GM12878 (cell line): ENCODE measurements at regions of chr6 and their contacts with region 1.

Region 1: DNA sequence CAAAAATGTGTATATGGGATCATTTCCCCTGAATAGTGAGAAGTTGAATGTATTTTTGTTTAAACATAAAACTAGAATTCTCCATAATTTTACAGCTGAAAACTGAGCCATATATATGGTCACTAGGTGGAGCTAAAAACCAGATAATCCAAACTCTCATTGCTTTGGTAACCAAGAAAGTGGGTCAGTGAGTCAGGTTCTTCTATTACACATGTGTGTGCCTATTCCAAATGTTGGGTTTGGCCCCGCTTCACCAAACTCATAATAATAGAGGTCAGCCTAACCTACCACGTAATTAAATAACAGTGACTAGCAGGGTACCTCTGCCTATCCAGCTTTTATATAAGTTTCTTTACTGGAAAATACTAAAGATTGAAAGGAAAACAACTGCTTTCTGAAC is 19.3 kb upstream of the RNGTT start:
- DNase-seq: peak; percentile 19
- ATAC-seq: peak; percentile 94
- H3K4me3 ChIP-seq: no peak overlapping the region
- H3K27ac ChIP-seq: no peak overlapping the region
- H3K4me1 ChIP-seq: no peaks in the 10 kb centered on the region; the same call in 1 of the 2 replicates
- H3K27me3 ChIP-seq: no peaks in the 10 kb centered on the region
- CTCF ChIP-seq: peak; percentile 51 to 83 (median 72); a peak in 5 of 6 replicates
- EP300 ChIP-seq: no peak
- POLR2A ChIP-seq: no peak
- RAD21 ChIP-seq: peak; percentile 89

Region 2: GRCh38 chr6:88908598-88909548 is 73.8 kb before region 1 on chr6:
- CTCF ChIA-PET with region 1: no interaction called
- POLR2A ChIA-PET with region 1: no interaction called
- RAD21 ChIA-PET with region 1: no interaction called
- SMC1A ChIA-PET with region 1: no interaction called
- in situ Hi-C with region 1: no loop called
- intact Hi-C with region 1: no loop called
- DNase-seq: no peak
- ATAC-seq: no peak
- H3K4me3 ChIP-seq: no peak overlapping the region
- H3K27ac ChIP-seq: no peak overlapping the region
- H3K4me1 ChIP-seq: no peaks in the 10 kb centered on the region
- H3K27me3 ChIP-seq: no peaks in the 10 kb centered on the region
- CTCF ChIP-seq: no peak
- EP300 ChIP-seq: no peak
- POLR2A ChIP-seq: no peak
- RAD21 ChIP-seq: no peak

Region 3: DNA sequence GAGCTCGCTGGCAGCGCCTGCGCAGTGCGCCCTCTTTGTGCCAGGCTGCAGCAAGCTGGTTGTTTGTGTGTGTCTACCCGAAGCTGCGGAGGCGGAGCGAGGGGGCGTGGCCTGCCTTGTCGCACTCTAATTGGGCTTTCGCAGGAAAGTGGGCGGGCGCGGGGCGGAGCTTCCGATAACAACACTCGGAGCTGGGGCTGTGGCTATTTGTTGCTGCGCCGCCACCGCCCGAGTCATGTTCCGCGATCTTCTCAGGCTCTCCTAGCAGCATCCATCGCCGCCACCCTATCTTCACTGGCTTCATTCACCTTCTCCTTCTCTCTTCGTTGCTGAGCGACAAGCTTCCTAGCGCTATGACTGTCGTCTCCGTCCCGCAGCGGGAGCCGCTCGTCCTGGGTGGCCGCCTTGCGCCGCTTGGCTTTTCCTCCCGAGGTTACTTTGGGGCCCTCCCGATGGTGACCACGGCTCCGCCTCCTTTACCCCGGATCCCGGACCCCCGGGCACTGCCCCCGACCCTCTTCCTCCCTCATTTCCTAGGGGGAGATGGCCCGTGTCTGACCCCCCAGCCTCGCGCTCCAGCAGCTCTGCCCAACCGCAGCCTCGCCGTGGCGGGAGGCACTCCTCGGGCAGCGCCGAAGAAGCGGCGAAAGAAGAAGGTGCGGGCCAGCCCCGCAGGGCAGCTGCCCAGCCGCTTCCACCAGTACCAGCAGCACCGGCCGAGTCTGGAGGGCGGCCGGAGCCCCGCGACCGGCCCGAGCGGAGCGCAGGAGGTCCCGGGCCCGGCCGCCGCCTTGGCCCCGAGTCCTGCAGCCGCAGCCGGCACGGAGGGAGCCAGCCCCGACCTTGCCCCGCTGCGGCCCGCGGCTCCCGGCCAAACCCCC is 98.1 kb after region 1 on chr6 and contains the start of gene PNRC1:
- CTCF ChIA-PET with region 1: interaction called, 9 read pairs
- POLR2A ChIA-PET with region 1: interaction called, 5 read pairs
- RAD21 ChIA-PET with region 1: interaction called, 6 read pairs
- SMC1A ChIA-PET with region 1: interaction called, 20 read pairs
- in situ Hi-C with region 1: no loop called
- intact Hi-C with region 1: no loop called
- DNase-seq: peak; percentile 96
- ATAC-seq: peak; percentile 85
- H3K4me3 ChIP-seq: peak within 1 kb of the TSS; percentile 93
- H3K27ac ChIP-seq: peak within 1 kb of the TSS; percentile 99
- H3K4me1 ChIP-seq: no peaks in the 10 kb centered on the region
- H3K27me3 ChIP-seq: no peaks in the 10 kb centered on the region
- CTCF ChIP-seq: no peak
- EP300 ChIP-seq: no peak; a peak in 1 of 4 replicates
- POLR2A ChIP-seq: peak; percentile 100
- RAD21 ChIP-seq: no peak
- polyA plus RNA-seq, gene PNRC1: 7.6 to 9.5 TPM

Region 4: GRCh38 chr6:89145787-89146646 is 163.3 kb after region 1 on chr6 and contains the start of gene PM20D2:
- CTCF ChIA-PET with region 1: interaction called, 22 read pairs
- POLR2A ChIA-PET with region 1: no interaction called
- RAD21 ChIA-PET with region 1: interaction called, 6 read pairs
- SMC1A ChIA-PET with region 1: interaction called, 4 read pairs
- in situ Hi-C with region 1: no loop called
- intact Hi-C with region 1: no loop called
- DNase-seq: no peak
- ATAC-seq: peak; percentile 84
- H3K4me3 ChIP-seq: peak within 1 kb of the TSS; percentile 71
- H3K27ac ChIP-seq: peak within 1 kb of the TSS; percentile 75
- H3K4me1 ChIP-seq: peaks cover 16% of the 10 kb centered on the region
- H3K27me3 ChIP-seq: no peaks in the 10 kb centered on the region
- CTCF ChIP-seq: no peak
- EP300 ChIP-seq: no peak
- POLR2A ChIP-seq: peak; percentile 86
- RAD21 ChIP-seq: no peak
- polyA plus RNA-seq, gene PM20D2: 7.8 to 8.3 TPM

Region 5: GRCh38 chr6:89352278-89353117 is 369.8 kb after region 1 on chr6 and contains the start of gene UBE2J1:
- CTCF ChIA-PET with region 1: interaction called, 17 read pairs
- POLR2A ChIA-PET with region 1: no interaction called
- RAD21 ChIA-PET with region 1: interaction called, 5 read pairs
- SMC1A ChIA-PET with region 1: no interaction called
- in situ Hi-C with region 1: no loop called
- intact Hi-C with region 1: loop called (anchors 5 kb)
- DNase-seq: no peak
- ATAC-seq: peak; percentile 79
- H3K4me3 ChIP-seq: peak within 1 kb of the TSS; percentile 98
- H3K27ac ChIP-seq: peak within 1 kb of the TSS; percentile 97
- H3K4me1 ChIP-seq: peaks cover 50% of the 10 kb centered on the region
- H3K27me3 ChIP-seq: no peaks in the 10 kb centered on the region
- CTCF ChIP-seq: no peak
- EP300 ChIP-seq: peak in 1 of 2 experiments; percentile 23; a peak in 1 of 4 replicates
- POLR2A ChIP-seq: peak; percentile 95
- RAD21 ChIP-seq: no peak
- polyA plus RNA-seq, gene UBE2J1: 48.7 to 69.1 TPM

Region 6: DNA sequence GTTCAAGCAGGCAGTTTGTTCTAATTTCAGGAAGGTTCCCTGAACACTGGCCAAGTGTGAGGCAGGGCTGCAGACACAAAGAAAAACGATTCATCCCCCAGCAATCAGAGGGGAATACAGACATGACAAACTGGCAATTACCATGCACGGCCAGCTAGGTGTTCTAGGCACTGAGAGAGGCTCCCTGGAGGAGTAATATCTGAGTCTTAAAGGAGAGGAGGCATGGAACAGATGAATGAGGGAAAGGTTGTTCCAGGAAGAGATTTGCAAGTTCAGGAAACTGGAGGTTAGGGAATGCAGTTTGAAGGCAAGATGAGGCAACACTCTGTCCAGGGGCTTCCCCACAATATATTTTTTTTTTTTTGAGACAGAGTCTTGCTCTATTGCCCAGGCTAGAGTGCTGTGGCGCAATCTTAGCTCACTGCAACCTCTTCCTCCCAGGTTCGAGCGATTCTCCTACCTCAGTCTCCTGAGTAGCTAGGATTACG is 418.2 kb after region 1 on chr6:
- CTCF ChIA-PET with region 1: no interaction called
- POLR2A ChIA-PET with region 1: no interaction called
- RAD21 ChIA-PET with region 1: no interaction called
- SMC1A ChIA-PET with region 1: no interaction called
- in situ Hi-C with region 1: no loop called
- intact Hi-C with region 1: no loop called
- DNase-seq: no peak
- ATAC-seq: peak; percentile 42
- H3K4me3 ChIP-seq: no peak overlapping the region
- H3K27ac ChIP-seq: no peak overlapping the region
- H3K4me1 ChIP-seq: peaks cover 8% of the 10 kb centered on the region
- H3K27me3 ChIP-seq: no peaks in the 10 kb centered on the region
- CTCF ChIP-seq: no peak
- EP300 ChIP-seq: no peak
- POLR2A ChIP-seq: no peak
- RAD21 ChIP-seq: no peak

Region 7: DNA sequence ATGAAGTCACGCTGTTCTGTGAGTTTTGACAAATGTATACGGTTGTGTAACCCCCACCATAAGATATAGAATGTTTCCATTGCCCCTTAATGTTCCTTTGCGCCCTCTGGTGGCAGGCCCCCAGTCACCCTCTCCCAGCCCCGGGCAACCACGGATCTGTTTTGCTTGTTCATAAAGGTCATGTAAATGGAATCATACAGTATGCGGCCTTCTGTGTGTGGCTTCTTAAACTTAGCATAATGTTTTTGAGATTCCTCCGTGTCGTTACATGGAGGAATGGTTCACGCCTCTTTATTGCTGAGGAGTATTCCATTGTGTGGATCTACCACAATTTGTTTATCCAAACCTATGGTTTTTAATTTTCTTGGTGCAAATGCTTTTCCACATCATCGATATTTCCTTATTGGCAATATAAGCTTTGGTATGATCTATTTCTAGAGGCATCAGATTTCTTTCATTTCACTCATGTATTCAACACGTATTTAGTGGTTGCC is 627.5 kb after region 1 on chr6:
- CTCF ChIA-PET with region 1: interaction called, 11 read pairs
- POLR2A ChIA-PET with region 1: no interaction called
- RAD21 ChIA-PET with region 1: no interaction called
- SMC1A ChIA-PET with region 1: interaction called, 7 read pairs
- in situ Hi-C with region 1: loop called (anchors 5 kb)
- intact Hi-C with region 1: loop called (anchors 5 kb)
- DNase-seq: peak; percentile 30
- ATAC-seq: peak; percentile 98
- H3K4me3 ChIP-seq: no peak overlapping the region
- H3K27ac ChIP-seq: no peak overlapping the region
- H3K4me1 ChIP-seq: no peaks in the 10 kb centered on the region
- H3K27me3 ChIP-seq: no peaks in the 10 kb centered on the region
- CTCF ChIP-seq: peak; percentile 81 to 93 (median 91)
- EP300 ChIP-seq: no peak
- POLR2A ChIP-seq: no peak
- RAD21 ChIP-seq: peak; percentile 73